ENCODE measurements at regions of chr20 and their contacts with region 1.

Region 1: DNA sequence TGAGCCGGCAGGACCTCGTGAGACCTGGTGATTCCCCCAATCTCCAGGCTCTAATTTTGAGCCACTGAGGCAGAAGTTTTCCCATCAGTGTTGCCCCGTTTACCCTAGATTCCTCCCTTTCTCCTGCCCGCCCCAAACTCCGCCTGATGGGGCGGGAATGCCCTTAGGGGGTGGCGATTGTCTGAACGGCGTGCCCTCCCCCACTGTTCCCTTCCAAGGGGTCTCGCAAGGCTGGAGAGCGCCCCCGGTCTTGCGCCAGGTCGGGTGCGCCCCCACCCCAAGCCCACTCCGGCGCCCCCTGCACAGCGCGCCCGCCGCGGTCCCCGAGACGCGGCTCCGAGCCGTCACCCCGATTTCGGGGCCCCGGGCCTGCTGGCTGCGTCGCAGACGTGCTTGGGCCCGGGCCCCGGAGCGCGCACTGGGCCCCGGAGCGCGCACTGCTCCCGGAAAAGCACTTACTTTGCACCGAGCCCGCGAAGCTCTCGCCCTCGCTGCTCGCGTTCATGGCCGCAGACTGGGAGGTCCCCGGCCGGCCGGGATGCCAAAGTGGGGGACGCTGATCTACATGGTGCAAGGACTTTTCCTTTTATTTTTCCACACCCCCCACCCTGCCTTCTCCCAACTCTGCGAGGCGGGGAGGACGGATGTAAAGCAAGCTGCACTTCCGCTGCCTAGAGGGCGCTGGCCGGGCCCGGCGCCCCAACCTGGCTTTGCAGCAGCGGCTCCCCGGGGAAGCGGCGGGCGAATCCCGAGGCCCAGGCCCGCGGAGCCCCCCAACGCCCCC is at the start of gene ZFP64:
- DNase-seq: peak; percentile 92
- H3K4me3 Mint-ChIP-seq: peak within 1 kb of the TSS; percentile 95
- H3K27ac Mint-ChIP-seq: peak within 1 kb of the TSS; percentile 89
- H3K4me1 Mint-ChIP-seq: peaks cover 9% of the 10 kb centered on the region
- H3K27me3 Mint-ChIP-seq: no peaks in the 10 kb centered on the region
- total RNA-seq, gene ZFP64: 12.6 and 12.8 TPM in 2 replicates

Region 2: DNA sequence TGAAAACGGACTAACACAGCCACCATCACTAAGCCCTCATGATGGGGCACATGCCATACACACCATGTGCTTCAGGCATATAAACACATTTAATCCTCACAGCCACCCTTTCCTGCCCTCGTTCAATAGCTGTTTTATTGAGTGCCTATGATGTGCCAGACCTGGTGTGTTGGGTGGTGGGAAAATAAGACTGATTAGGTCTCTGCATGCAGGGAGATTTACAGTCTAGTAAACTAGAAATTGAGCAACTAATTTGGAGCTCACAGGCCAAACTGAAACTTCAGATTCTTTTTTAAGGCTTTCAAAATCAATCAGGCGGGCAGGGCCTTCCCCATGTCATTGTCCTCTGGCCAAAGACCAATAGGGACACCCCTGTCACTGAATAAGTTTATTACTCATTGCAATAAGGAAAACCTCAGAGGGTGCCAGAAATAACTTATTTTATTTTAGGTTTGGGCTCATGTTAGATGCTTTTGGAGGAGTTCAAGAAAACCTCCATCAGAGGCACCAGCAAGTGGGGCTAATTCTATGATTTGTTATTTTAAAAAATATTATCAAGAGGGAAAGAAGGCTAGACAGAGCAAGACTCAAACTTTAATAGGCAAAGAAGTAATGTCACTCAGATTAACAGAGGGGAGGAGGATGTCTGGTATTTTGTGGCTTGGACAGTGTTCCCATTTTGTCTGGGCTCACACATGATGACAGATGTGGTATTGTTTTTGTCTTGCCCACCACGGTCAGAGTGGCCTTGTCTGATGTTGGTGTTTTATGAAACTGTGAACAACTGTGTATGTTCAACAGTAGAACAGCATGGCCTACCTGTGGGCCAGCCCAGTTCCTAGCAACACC is 11.8 kb before region 1 on chr20:
- intact Hi-C with region 1: loop called (anchors 1 kb)
- DNase-seq: no peak
- H3K4me3 Mint-ChIP-seq: no peak overlapping the region
- H3K27ac Mint-ChIP-seq: peak overlapping the region; percentile 25
- H3K4me1 Mint-ChIP-seq: peaks cover 8% of the 10 kb centered on the region
- H3K27me3 Mint-ChIP-seq: no peaks in the 10 kb centered on the region

Region 3: GRCh38 chr20:53934421-53935343 is 1743.4 kb after region 1 on chr20:
- intact Hi-C with region 1: loop called (anchors 5 kb)
- DNase-seq: peak; percentile 71
- H3K4me3 Mint-ChIP-seq: peak overlapping the region; percentile 58
- H3K27ac Mint-ChIP-seq: peak overlapping the region; percentile 93
- H3K4me1 Mint-ChIP-seq: peaks cover 42% of the 10 kb centered on the region
- H3K27me3 Mint-ChIP-seq: no peaks in the 10 kb centered on the region

Measured in activated CD4-positive, alpha-beta T cell treated with anti-CD3 and anti-CD28 coated beads, Interleukin-2, amount 10 ng/mL, durations not matched to agents 24 days and 14 days (primary cell).